K562 (cell line): ENCODE measurements at regions of chr11 and their contacts with region 1.

Region 1: DNA sequence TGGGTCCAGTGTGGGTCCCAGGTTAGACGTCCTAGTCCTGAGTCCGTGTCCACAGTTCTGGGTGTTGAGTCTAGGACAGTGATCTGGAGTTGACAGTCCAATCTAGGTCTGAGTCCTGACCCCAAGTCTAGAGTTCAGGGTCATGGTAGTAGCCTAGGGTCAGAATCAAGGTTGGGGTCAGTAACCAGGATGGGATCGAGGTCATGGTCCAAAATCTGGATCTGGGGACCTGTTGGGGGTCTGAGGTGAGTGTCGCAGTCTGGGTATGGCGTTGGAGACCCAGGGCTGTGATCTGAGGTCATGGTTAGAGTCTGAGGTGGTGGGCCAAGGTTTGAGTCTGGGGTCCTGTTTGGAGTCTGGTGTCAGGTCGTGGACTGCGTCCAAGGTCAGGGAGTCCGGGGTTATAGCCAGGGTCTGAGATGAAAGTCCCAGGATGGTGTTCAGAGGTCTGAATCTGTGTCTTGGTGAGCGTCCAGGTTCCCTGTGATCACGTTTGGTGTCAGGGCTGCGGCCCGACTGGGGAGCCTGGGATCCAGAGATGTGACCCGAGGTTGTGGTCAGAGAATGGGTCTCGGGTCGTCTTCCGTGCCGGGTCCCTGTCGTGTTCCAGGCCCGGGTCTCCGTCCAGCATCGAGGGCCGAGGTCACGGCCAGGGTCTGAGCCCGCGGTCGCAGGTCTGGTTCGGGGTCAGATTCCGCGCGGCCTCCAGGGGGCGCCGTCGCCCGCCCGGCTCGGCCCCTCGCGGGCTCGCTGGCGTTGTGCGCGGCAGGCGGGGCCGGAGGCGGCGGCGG is 445 bp upstream of the GRK2 start:
- DNase-seq: peak in 2 of 4 experiments; percentile 84 to 91
- ATAC-seq: peak; percentile 84
- H3K4me3 ChIP-seq: no peak overlapping the region
- H3K27ac ChIP-seq: peak overlapping the region; percentile 61; the same call in 2 of the 3 replicates
- H3K4me1 ChIP-seq: peaks cover 49 to 71% of the 10 kb centered on the region in 2 experiments
- H3K27me3 ChIP-seq: no peaks in the 10 kb centered on the region
- CTCF ChIP-seq: peak; percentile 69 to 88 (median 82)
- EP300 ChIP-seq: no peak
- POLR2A ChIP-seq: no peak
- RAD21 ChIP-seq: peak; percentile 71 to 79

Region 2: DNA sequence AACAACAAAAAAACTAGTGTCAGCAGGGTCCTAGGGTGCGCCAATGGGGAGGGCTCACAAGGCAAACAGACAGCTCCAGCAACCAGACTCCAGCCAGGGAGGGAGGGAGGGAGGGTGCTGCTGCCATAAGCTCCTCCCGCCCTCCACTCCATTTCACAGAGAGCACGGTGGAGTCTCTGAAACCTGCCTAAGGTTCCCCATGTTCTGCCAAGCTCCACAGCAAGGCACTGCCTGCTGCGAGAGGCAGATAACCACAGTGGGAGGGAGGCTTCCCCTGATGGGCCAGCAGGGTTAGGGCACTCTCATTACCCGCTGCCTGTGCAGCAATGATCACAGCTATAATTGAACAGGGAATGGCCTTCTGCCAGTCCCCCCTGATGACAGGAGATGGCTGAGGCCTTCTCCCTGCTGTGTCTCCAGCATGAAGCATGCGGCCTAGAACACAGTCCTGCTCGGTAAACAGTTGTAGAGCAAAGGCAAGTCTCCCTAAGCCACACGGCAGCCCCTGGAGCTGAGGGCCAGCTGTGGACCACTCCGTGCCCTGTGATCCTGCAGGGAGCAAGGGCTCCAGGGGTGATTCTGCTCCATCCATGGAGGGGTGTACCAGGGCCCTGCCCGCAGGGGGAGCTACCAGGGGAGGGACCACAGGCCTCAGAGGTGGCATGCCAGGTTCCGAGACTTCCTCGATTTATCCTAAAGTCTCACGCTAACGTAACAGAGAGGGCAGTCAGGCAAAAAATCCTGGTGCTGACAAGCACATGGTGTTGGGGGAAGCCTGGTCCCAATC is 350.6 kb before region 1 on chr11:
- CTCF ChIA-PET with region 1: no interaction called
- POLR2A ChIA-PET with region 1: no interaction called
- in situ Hi-C with region 1: no loop called
- intact Hi-C with region 1: no loop called
- DNase-seq: peak in 3 of 4 experiments; percentile 45 to 55 (median 51)
- ATAC-seq: peak; percentile 87
- H3K4me3 ChIP-seq: no peak overlapping the region
- H3K27ac ChIP-seq: no peak overlapping the region; the same call in 2 of the 3 replicates
- H3K4me1 ChIP-seq: peaks cover 12 to 17% of the 10 kb centered on the region in 2 experiments; a peak in 4 of 5 replicates
- H3K27me3 ChIP-seq: no peaks in the 10 kb centered on the region
- CTCF ChIP-seq: 0 out of 6 replicates have a peak, but pooled peaks of 2 of the 3 experiments have one; percentile 9 to 22
- EP300 ChIP-seq: no peak
- POLR2A ChIP-seq: no peak
- RAD21 ChIP-seq: no peak

Region 3: DNA sequence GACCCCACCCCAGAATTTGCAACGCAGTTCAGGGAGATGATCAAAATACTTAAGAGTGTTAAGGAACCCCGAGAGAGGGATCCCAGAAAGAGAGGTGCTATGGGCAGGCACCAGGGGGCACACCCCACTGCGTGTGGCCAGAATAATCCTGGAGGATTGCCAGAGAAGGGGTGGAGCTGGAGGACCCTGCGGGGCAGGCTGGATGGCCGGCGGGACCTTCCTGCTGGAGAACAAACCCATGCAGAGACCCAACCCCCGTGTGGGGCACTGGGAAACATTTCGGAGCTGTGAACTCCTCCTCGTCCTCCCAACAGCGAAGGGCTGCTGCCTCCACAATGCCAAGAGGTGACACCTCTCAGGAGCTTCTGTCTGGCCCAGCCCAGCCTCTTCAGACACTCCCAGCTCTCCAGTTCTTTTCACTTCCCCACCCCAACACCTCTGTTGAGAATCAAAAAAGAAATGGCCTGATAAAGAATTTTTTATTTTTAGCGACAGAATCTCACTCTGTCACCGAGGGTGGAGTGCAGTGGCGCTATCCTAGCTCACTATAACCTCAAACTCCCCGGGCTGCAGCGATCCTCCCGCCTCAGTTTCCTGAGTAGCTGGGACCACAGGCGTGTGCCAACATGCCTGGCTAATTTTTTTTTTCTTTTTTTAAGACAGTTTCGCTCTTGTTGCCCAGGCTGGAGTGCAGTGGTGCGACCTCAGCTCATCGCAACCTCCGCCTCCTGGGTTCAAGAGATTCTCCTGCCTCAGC is 183.6 kb before region 1 on chr11:
- CTCF ChIA-PET with region 1: interaction called, 4 read pairs
- POLR2A ChIA-PET with region 1: no interaction called
- in situ Hi-C with region 1: no loop called
- intact Hi-C with region 1: loop called (anchors 5 kb)
- DNase-seq: peak; percentile 44 to 75 (median 64)
- ATAC-seq: peak; percentile 49
- H3K4me3 ChIP-seq: no peak overlapping the region
- H3K27ac ChIP-seq: no peak overlapping the region
- H3K4me1 ChIP-seq: peaks cover 20 to 25% of the 10 kb centered on the region in 2 experiments; a peak in 4 of 5 replicates
- H3K27me3 ChIP-seq: no peaks in the 10 kb centered on the region
- CTCF ChIP-seq: peak in 2 of 3 experiments; percentile 29 to 47; a peak in 4 of 6 replicates
- EP300 ChIP-seq: no peak
- POLR2A ChIP-seq: no peak
- RAD21 ChIP-seq: peak in 1 of 2 experiments; percentile 55; a peak in 2 of 4 replicates

Region 4: DNA sequence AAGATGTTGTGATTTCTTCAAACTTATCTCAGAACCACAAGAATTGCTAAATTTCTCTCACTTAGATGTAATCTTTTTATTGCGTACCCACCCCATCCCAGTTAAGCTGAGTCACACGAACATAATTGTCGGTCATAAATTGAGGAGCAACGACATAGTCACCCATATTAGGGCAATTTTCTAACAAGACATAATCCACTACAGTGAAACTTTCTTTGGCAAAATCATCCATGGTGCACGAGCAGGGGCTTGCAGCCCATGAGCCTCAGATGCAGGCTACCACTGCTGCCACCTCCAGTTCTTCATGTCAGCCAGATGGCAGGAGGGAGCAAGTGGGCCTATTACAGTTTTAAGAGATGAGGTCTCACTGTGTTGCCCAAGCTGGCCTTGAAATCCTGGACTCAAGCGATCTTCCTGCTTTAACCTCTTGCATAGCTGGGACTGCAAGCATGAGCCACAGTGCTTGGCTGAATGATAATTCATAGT is 69.8 kb before region 1 on chr11:
- CTCF ChIA-PET with region 1: no interaction called
- POLR2A ChIA-PET with region 1: no interaction called
- in situ Hi-C with region 1: no loop called
- intact Hi-C with region 1: no loop called
- DNase-seq: no peak
- ATAC-seq: no peak
- H3K4me3 ChIP-seq: no peak overlapping the region
- H3K27ac ChIP-seq: no peak overlapping the region
- H3K4me1 ChIP-seq: no peaks in the 10 kb centered on the region
- H3K27me3 ChIP-seq: no peaks in the 10 kb centered on the region
- CTCF ChIP-seq: 0 out of 6 replicates have a peak, but pooled peaks of 1 of the 3 experiments have one; percentile 9
- EP300 ChIP-seq: no peak
- POLR2A ChIP-seq: no peak
- RAD21 ChIP-seq: no peak

Region 5: GRCh38 chr11:67277231-67277961 is 11.6 kb after region 1 on chr11:
- CTCF ChIA-PET with region 1: no interaction called
- POLR2A ChIA-PET with region 1: interaction called, 12 read pairs
- in situ Hi-C with region 1: no loop called
- intact Hi-C with region 1: no loop called
- DNase-seq: peak; percentile 83 to 94 (median 86)
- ATAC-seq: peak; percentile 95
- H3K4me3 ChIP-seq: peak overlapping the region; percentile 37
- H3K27ac ChIP-seq: peak overlapping the region; percentile 95
- H3K4me1 ChIP-seq: peaks cover 27 to 86% of the 10 kb centered on the region in 2 experiments
- H3K27me3 ChIP-seq: no peaks in the 10 kb centered on the region
- CTCF ChIP-seq: no peak
- EP300 ChIP-seq: peak; percentile 77
- POLR2A ChIP-seq: peak; percentile 81
- RAD21 ChIP-seq: peak in 1 of 2 experiments; percentile 5; a peak in 1 of 4 replicates

Region 6: GRCh38 chr11:67288452-67289225 is 22.8 kb after region 1 on chr11:
- CTCF ChIA-PET with region 1: interaction called, 5 read pairs
- POLR2A ChIA-PET with region 1: interaction called, 4 read pairs
- in situ Hi-C with region 1: no loop called
- intact Hi-C with region 1: loop called (anchors 1 kb)
- DNase-seq: peak; percentile 90 to 94 (median 92)
- ATAC-seq: peak; percentile 86
- H3K4me3 ChIP-seq: peak overlapping the region; percentile 71
- H3K27ac ChIP-seq: peak overlapping the region; percentile 93
- H3K4me1 ChIP-seq: peaks cover 15 to 56% of the 10 kb centered on the region in 2 experiments
- H3K27me3 ChIP-seq: no peaks in the 10 kb centered on the region
- CTCF ChIP-seq: peak in 2 of 3 experiments; percentile 50 to 65; a peak in 4 of 6 replicates
- EP300 ChIP-seq: peak; percentile 73
- POLR2A ChIP-seq: peak; percentile 91
- RAD21 ChIP-seq: peak; percentile 60 to 65

Region 7: DNA sequence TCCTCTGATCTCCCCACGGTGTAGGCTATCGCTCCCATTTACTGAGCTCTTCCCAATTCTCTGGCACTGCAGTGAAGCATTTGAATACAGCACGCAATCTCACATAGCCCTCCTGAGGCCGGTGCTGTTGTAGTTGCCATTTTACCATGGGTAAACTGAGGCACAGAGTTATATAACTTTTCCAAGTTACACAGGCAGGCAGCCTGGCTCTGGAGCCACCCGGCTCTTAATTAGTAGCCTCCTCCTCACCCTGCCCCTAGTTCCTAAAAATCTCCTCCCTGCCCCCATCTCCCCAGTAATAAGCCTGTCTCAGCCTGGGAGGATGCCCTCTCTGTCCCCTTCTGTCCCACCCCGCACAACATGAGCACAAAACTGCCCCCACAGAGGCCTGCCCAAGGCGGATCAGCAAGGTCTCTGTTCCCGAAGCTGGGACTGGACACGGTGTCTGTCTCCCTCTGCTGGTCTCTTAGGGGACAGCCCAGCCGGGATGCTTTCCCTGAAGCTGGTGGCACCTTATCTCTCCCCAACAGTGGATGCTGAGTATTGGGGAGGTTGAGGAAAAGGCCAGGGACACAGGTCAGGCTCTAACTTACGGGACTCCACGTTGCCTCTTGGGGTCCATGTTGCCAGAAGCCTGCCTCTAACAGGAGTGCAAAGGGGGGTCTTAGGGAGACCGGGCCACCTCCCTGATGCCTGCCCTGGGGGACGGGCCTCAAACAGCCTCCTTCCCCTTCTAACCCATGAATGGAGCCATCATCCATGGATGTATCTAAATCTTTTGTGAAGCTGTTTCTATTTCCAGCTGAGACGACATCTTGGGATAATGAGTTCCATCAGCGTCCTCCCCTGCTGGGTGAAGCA is 116.7 kb after region 1 on chr11:
- CTCF ChIA-PET with region 1: interaction called, 6 read pairs
- POLR2A ChIA-PET with region 1: no interaction called
- in situ Hi-C with region 1: loop called (anchors 5 kb)
- intact Hi-C with region 1: loop called (anchors 1 kb)
- DNase-seq: peak; percentile 68 to 91 (median 78)
- ATAC-seq: peak; percentile 88
- H3K4me3 ChIP-seq: no peak overlapping the region
- H3K27ac ChIP-seq: no peak overlapping the region
- H3K4me1 ChIP-seq: peaks cover 43 to 51% of the 10 kb centered on the region in 2 experiments
- H3K27me3 ChIP-seq: no peaks in the 10 kb centered on the region
- CTCF ChIP-seq: peak; percentile 97 to 99 (median 98)
- EP300 ChIP-seq: peak; percentile 28; the same call in 1 of the 2 replicates
- POLR2A ChIP-seq: no peak
- RAD21 ChIP-seq: peak; percentile 99